ENCODE measurements at regions of chr4 and their contacts with region 1.

Region 1: GRCh38 chr4:121252224-121252806 is 88.2 kb upstream of the TNIP3 start:
- DNase-seq: peak; percentile 36 to 72 (median 39)
- H3K4me3 ChIP-seq: no peak overlapping the region
- H3K4me3 Mint-ChIP-seq: peak overlapping the region in 3 of 7 donors; percentile 2 to 67 (median 36)
- H3K27ac ChIP-seq: no peak overlapping the region
- H3K27ac Mint-ChIP-seq: peak overlapping the region; percentile 48 to 86 (median 78)
- H3K4me1 ChIP-seq: peaks cover 50% of the 10 kb centered on the region
- H3K4me1 Mint-ChIP-seq: peaks cover 50 to 71% (median 65%) of the 10 kb centered on the region in 3 donors
- H3K27me3 ChIP-seq: no peaks in the 10 kb centered on the region
- H3K27me3 Mint-ChIP-seq: no peaks in the 10 kb centered on the region

Region 2: DNA sequence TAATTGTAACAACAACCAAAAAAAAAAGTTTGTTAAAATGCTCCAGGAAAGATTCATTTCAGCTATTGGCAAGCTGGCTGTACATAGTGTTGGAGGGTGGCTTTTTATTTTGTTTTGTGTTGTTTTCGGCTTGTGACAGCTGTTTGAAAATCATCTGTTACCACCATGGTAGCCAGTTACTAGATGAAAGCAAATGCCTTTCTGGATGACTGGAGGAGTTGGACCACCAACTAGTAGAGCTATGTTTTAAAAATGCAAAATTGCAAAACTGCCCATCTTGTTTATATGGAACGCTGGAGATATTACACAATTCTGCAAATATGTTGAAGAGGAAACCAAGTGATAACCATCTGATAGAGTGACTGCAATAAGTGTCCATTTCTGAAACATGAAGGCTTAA is 35.0 kb before region 1 on chr4:
- CTCF ChIA-PET with region 1: interaction called, 10 read pairs
- POLR2A ChIA-PET with region 1: interaction called, 4 read pairs
- DNase-seq: no peak
- H3K4me3 ChIP-seq: no peak overlapping the region
- H3K4me3 Mint-ChIP-seq: peak overlapping the region in 3 of 7 donors; percentile 0 to 73 (median 4)
- H3K27ac ChIP-seq: no peak overlapping the region
- H3K27ac Mint-ChIP-seq: peak overlapping the region in 7 of 8 donors; percentile 9 to 96 (median 93)
- H3K4me1 ChIP-seq: peaks cover 35% of the 10 kb centered on the region
- H3K4me1 Mint-ChIP-seq: peaks cover 49 to 88% (median 69%) of the 10 kb centered on the region in 3 donors
- H3K27me3 ChIP-seq: no peaks in the 10 kb centered on the region
- H3K27me3 Mint-ChIP-seq: no peaks in the 10 kb centered on the region

Measured in CD8-positive, alpha-beta memory T cell (primary cell).